ENCODE measurements at regions of chr7 and their contacts with region 1.

Region 1: DNA sequence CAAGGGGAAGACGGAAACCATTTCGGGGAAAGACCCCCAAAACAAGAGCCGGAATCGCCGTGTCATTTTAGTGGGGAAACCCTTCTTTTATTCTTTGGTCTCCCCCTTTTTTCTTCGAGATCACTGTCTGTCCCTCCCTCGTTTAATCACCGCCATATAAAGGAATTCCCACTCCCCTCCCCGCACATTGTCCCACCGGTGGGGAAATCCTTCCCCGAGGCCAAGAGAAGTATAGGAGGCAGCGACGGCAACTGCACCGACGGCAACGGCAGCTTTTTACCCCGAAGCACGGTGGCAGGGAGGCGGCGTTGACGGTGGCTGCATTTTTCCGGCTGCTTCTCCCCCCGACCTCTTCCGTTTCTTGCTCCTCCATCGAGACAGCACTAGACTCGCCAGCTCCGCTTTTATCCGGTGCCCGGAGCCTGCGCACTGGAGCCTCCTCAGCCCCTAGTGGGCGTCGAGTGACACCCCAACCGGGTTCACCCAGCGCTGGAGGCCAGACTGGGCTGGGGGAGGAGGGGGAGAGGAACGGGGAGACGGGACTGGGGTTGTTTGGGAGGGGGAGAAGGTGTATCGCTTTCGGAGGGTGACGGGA is 687 bp upstream of the KMT2E start:
- DNase-seq: peak; percentile 95
- H3K4me3 Mint-ChIP-seq: peak overlapping the region; percentile 100
- H3K27ac Mint-ChIP-seq: peak overlapping the region; percentile 100
- H3K4me1 Mint-ChIP-seq: peaks cover 28% of the 10 kb centered on the region
- H3K27me3 Mint-ChIP-seq: no peaks in the 10 kb centered on the region
- CTCF ChIP-seq: peak; percentile 42

Region 2: GRCh38 chr7:104983578-104984539 is 29.5 kb before region 1 on chr7:
- CTCF ChIA-PET with region 1: interaction called, 119 read pairs
- POLR2A ChIA-PET with region 1: interaction called, 620 read pairs
- intact Hi-C with region 1: loop called (anchors 1 kb)
- DNase-seq: peak; percentile 91
- H3K4me3 Mint-ChIP-seq: peak overlapping the region; percentile 94
- H3K27ac Mint-ChIP-seq: peak overlapping the region; percentile 100
- H3K4me1 Mint-ChIP-seq: peaks cover 25% of the 10 kb centered on the region
- H3K27me3 Mint-ChIP-seq: no peaks in the 10 kb centered on the region
- CTCF ChIP-seq: peak; percentile 45

Region 3: DNA sequence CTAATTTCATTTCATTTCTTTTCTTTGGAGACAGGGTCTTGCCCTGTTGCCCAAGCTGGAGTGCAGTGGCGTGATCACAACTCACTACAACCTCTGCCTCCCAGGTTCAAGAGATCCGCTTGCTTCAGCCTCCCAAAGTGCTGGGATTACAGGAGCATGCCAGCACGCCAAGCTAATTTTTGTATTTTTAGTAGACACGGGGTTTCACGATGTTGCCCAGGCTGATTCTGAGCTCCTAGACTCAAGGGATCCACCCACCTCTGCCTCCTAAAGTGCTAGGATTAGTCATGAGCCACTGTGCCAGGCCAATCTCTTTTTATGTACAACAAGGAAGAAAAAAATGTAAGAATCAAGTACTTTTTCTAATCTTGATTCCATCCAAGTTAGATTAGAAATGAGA is 10.0 kb before region 1 on chr7:
- CTCF ChIA-PET with region 1: interaction called, 3 read pairs
- POLR2A ChIA-PET with region 1: interaction called, 129 read pairs
- intact Hi-C with region 1: no loop called
- DNase-seq: peak; percentile 81
- H3K4me3 Mint-ChIP-seq: peak overlapping the region; percentile 61
- H3K27ac Mint-ChIP-seq: peak overlapping the region; percentile 47
- H3K4me1 Mint-ChIP-seq: peaks cover 37% of the 10 kb centered on the region
- H3K27me3 Mint-ChIP-seq: no peaks in the 10 kb centered on the region
- CTCF ChIP-seq: no peak

Region 4: DNA sequence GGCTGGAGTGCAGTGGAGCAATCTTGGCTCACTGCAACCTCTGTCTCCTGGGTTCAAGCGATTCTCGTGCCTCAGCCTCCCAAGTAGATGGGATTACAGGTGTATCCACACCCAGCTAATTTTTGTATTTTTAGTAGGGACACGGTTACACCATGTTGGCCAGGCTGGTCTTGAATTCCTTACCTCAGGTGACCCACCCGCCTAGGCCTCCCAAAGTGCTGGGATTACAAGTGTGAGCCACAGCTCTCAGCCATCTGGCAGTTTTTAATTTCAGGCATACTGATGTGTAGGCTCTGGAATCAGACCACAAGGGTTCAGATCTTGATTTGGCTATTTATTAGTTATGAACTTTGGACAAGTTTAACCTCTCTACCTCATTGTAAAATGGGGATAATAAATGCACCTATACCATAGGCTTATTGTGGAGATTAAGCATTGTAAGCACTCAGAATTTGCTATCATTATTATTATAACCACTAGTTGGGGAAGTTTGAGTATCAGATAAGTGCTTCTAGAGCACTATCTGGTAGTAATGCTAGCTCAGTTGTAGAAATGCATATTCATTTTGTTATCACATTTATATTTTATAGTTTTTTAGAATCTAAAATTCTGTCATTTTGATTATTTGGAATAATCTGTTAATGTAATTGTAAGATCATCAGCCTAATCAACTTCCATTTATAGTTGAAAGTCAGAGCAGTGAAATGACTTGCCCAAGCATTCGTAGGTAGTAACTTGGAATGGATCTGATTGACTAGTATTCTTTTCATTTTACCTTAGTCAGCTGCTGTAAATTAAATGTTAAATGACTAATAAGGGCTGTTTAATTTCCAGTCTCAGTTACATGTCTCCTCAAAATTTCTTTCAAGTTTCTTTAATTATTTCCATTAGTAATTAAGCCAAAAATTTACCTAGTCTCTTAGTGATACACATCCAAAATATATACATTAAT is 23.2 kb after region 1 on chr7:
- CTCF ChIA-PET with region 1: interaction called, 5 read pairs
- POLR2A ChIA-PET with region 1: interaction called, 25 read pairs
- intact Hi-C with region 1: no loop called
- DNase-seq: no peak
- H3K4me3 Mint-ChIP-seq: no peak overlapping the region
- H3K27ac Mint-ChIP-seq: no peak overlapping the region
- H3K4me1 Mint-ChIP-seq: peaks cover 4% of the 10 kb centered on the region
- H3K27me3 Mint-ChIP-seq: no peaks in the 10 kb centered on the region
- CTCF ChIP-seq: no peak

Region 5: DNA sequence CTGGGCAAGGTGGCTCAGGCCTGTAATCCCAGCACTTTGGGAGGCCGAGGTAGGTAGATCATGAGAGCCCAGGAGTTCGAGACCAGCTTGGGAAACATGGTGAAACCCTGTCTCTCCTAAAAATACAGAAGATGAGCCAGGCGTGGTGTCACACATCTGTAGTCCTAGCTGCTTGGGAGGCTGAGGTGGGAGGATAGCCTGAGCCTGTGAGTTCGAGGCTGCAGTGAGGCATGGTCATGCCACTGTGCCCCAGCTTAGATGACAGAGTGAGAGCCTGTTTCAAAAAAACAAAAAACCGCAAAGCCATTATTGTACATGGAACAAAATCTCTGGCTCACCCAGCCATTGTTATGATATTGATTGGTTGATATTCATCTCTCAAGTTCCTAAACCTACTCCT is 54.4 kb after region 1 on chr7:
- CTCF ChIA-PET with region 1: no interaction called
- POLR2A ChIA-PET with region 1: interaction called, 3 read pairs
- intact Hi-C with region 1: loop called (anchors 5 kb)
- DNase-seq: no peak
- H3K4me3 Mint-ChIP-seq: no peak overlapping the region
- H3K27ac Mint-ChIP-seq: no peak overlapping the region
- H3K4me1 Mint-ChIP-seq: peaks cover 3% of the 10 kb centered on the region
- H3K27me3 Mint-ChIP-seq: no peaks in the 10 kb centered on the region
- CTCF ChIP-seq: no peak